GM10248 (cell line): ENCODE measurements at regions of chr4 and their contacts with region 1.

Region 1: GRCh38 chr4:8459867-8460447 is 19.4 kb downstream of the TRMT44 start:
- DNase-seq: no peak
- CTCF ChIP-seq: no peak

Region 2: GRCh38 chr4:8446122-8446521 is 13.8 kb before region 1 on chr4:
- CTCF ChIA-PET with region 1: interaction called, 12 read pairs
- POLR2A ChIA-PET with region 1: no interaction called
- DNase-seq: no peak
- CTCF ChIP-seq: no peak

Region 3: GRCh38 chr4:8525382-8526120 is 65.6 kb after region 1 on chr4:
- CTCF ChIA-PET with region 1: no interaction called
- POLR2A ChIA-PET with region 1: no interaction called
- DNase-seq: no peak
- CTCF ChIP-seq: no peak

Region 4: DNA sequence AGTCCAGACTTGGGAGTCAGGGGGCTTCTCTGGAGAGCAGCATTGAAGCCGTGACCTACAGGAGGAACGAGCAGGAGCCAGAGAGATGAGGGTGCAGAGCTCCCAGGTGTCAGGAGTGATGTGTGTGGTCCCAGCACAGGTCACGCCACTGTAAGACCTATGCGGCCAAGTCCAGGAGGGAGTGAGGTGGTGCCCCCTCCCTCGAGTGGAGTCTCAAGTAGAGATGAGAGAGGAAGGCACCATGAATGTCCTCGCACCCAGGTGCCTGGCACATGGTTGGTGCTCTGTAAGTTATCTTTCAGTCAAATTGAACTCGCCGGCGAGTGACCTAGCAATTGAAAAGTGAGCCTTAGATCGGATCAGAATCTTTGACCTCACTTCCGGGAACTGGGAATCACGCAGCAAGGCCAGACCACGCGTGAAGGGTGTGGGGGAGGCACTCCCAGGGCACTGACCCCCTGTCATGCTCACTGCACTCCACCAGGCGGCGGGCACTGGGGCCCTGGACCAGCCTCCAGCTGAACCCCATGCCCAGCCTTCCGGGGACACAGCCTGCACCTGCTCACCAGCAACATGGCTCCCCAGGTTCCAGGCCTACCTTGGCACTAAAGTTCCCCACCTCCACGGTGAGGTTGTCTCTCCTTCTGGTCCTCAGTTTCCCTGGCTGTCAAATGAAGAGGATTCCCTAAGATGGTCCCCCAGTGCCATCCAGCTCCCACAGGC is 284.3 kb after region 1 on chr4:
- CTCF ChIA-PET with region 1: no interaction called
- POLR2A ChIA-PET with region 1: no interaction called
- DNase-seq: no peak
- CTCF ChIP-seq: no peak